ENCODE measurements at regions of chr22 and their contacts with region 1.

Region 1: GRCh38 chr22:22352371-22353365 is 108.1 kb downstream of the VPREB1 start:
- DNase-seq: no peak
- ATAC-seq: no peak
- H3K4me3 ChIP-seq: no peak overlapping the region
- H3K4me3 Mint-ChIP-seq: no peak overlapping the region
- H3K27ac ChIP-seq: no peak overlapping the region
- H3K27ac Mint-ChIP-seq: no peak overlapping the region
- H3K4me1 ChIP-seq: peaks cover 10% of the 10 kb centered on the region
- H3K4me1 Mint-ChIP-seq: peaks cover 5 to 6% of the 10 kb centered on the region in 2 donors
- H3K27me3 ChIP-seq: peaks cover 4% of the 10 kb centered on the region
- H3K27me3 Mint-ChIP-seq: peaks cover 25 to 57% of the 10 kb centered on the region in 2 donors
- CTCF ChIP-seq: no peak

Region 2: GRCh38 chr22:22375576-22376423 is 23.1 kb after region 1 on chr22:
- intact Hi-C with region 1: loop called (anchors 2 kb)
- DNase-seq: no peak
- ATAC-seq: peak in 1 of 3 donors; percentile 22
- H3K4me3 ChIP-seq: no peak overlapping the region
- H3K4me3 Mint-ChIP-seq: no peak overlapping the region
- H3K27ac ChIP-seq: no peak overlapping the region
- H3K27ac Mint-ChIP-seq: no peak overlapping the region
- H3K4me1 ChIP-seq: peaks cover 9% of the 10 kb centered on the region
- H3K4me1 Mint-ChIP-seq: peaks cover 0 to 4% of the 10 kb centered on the region in 2 donors
- H3K27me3 ChIP-seq: no peaks in the 10 kb centered on the region
- H3K27me3 Mint-ChIP-seq: peaks cover 30 to 34% of the 10 kb centered on the region in 2 donors
- CTCF ChIP-seq: no peak

Region 3: GRCh38 chr22:22397875-22398524 is 45.3 kb after region 1 on chr22:
- intact Hi-C with region 1: loop called (anchors 1 kb)
- DNase-seq: no peak
- ATAC-seq: no peak
- H3K4me3 ChIP-seq: no peak overlapping the region
- H3K4me3 Mint-ChIP-seq: no peak overlapping the region
- H3K27ac ChIP-seq: no peak overlapping the region
- H3K27ac Mint-ChIP-seq: no peak overlapping the region
- H3K4me1 ChIP-seq: no peaks in the 10 kb centered on the region
- H3K4me1 Mint-ChIP-seq: no peaks in the 10 kb centered on the region
- H3K27me3 ChIP-seq: no peaks in the 10 kb centered on the region
- H3K27me3 Mint-ChIP-seq: peaks cover 7 to 20% of the 10 kb centered on the region in 2 donors
- CTCF ChIP-seq: no peak